ENCODE measurements at regions of chr9 and their contacts with region 1.

Region 1: DNA sequence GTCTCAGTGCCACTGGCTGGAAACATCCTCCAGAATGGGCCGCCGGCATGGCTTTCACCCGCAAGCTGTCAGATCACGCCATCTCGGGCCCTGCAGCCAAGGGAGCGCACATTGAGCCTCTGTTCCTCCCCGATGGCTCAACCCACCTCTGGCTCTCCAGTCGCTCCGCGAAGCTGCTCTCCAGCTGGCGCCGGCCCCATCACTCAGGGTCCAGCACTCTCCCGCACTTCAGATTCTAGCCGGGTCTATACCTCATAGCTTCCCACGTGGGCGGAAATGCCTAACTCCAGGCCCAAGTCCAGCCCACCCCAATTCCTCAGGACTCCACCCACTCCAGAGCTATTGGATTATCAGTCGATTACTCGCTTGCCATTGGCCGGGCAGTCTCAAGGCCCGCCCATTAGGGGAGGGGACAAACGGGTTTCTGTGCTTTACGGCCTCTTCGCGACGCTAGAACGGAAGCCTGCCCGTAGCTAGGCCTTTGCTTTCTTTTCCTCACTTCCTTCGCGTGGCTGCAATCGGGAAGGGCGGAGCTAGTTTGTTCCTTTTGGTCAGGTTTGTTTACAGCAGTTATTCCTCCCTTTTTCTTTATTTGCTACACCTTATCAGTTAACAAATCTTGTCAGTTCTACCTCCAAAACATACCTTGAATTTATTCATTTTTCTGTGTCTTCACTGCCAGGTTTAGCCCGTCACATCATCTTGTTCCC is at the start of gene NOL6:
- DNase-seq: peak; percentile 99
- ATAC-seq: peak; percentile 100
- H3K4me3 Mint-ChIP-seq: peak within 1 kb of the TSS; percentile 98
- H3K27ac Mint-ChIP-seq: peak within 1 kb of the TSS; percentile 91
- H3K4me1 Mint-ChIP-seq: peaks cover 30% of the 10 kb centered on the region
- H3K27me3 Mint-ChIP-seq: no peaks in the 10 kb centered on the region
- total RNA-seq, gene NOL6: 34.3 to 43.1 TPM

Region 2: DNA sequence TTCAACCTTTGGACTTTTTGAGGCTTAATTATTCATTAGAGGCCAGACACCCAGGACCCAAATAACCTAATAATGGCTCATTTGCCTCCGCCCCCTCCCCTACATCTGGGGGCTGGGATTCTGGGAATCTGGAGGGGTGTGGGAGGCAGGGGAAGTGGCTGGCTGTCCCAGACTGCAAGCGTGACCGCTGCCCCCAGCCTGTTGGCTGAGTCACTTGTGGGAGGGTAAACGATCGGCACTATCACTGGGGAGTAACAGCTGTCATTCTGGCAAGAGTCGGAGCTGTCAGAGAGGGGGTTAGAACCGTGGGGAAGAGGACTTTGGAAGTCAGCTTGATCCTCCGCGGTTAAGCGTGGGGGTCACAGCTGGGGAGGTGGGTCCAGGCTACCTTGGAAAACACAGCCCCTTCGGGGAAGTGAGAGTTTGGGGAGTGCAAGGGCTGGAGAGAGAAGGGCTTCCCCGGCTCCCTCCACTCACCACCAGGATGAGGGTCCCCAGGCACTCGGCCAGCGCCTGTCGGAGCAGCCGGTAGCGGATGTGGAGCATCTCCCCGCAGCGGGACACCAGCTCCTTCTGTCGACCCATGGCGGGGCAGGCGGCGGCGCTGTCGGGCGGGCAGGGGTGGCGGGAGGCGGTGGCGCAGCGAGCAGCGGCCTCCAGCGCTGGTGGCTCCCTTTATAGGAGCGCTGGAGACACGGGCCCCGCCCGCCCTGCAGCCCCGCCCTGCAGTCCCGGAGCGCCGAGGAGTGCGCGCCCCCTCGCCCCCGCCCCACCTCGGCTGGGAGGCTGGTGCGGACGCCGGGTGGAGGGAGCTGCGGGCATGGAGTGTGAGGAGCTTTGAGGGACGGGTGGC is 26.6 kb before region 1 on chr9 and contains the start of gene AQP3:
- CTCF ChIA-PET with region 1: interaction called, 233 read pairs
- DNase-seq: peak; percentile 84
- ATAC-seq: peak; percentile 71
- H3K4me3 Mint-ChIP-seq: peak within 1 kb of the TSS; percentile 78
- H3K27ac Mint-ChIP-seq: peak within 1 kb of the TSS; percentile 88
- H3K4me1 Mint-ChIP-seq: peaks cover 38% of the 10 kb centered on the region
- H3K27me3 Mint-ChIP-seq: no peaks in the 10 kb centered on the region
- total RNA-seq, gene AQP3: 2.8 to 10.4 TPM

Region 3: DNA sequence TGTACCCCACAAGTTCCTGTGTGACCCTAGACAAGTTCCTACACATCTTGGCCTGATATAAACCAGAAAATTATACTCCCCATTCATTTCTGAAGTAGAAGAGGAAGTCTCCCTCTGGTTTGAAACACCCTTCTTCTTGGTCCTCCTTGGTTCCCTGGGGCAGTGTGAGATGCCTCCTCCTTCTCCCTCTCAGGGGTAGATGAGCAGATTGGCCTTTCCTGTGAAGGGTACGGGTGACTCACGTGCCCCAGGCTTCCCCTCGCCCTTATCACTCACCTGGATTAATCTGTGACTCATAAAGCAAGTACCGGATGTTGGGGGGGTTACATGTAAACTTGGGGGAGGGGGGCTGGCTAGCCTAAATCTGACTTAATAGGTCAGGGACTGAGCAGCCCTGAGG is 15.4 kb before region 1 on chr9:
- CTCF ChIA-PET with region 1: interaction called, 233 read pairs
- DNase-seq: peak; percentile 70
- ATAC-seq: peak; percentile 74
- H3K4me3 Mint-ChIP-seq: no peak overlapping the region
- H3K27ac Mint-ChIP-seq: peak overlapping the region; percentile 79
- H3K4me1 Mint-ChIP-seq: peaks cover 46% of the 10 kb centered on the region
- H3K27me3 Mint-ChIP-seq: no peaks in the 10 kb centered on the region